OCI-LY7 (cell line): ENCODE measurements at regions of chr22 and their contacts with region 1.

Region 1: GRCh38 chr22:24325105-24325757 is 54.6 kb downstream of the SPECC1L start:
- DNase-seq: peak; percentile 79
- H3K4me3 ChIP-seq: no peak overlapping the region
- H3K27ac ChIP-seq: no peak overlapping the region
- H3K4me1 ChIP-seq: peaks cover 10% of the 10 kb centered on the region
- CTCF ChIP-seq: peak; percentile 92

Region 2: DNA sequence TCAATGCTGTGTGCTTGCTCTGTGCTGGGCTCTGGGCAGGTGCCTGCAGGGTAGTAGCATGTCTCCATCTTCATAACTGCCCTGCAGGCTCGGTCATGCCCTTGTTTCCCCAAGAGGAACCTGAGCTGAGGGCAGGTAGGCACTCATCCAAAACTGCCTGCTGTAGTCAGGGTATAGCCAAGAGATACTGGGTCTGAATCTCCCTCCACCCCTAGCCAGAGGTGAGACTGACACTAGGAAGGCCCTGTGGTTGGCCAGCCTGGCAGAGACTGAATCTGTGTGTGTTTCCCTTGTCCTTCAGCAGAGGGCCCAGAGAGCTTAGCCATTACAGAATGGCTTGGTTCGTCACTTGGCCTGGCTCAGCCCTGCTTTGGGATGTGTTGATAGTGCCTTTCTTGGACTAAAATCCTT is 223.3 kb before region 1 on chr22:
- CTCF ChIA-PET with region 1: no interaction called
- POLR2A ChIA-PET with region 1: no interaction called
- intact Hi-C with region 1: no loop called
- DNase-seq: no peak
- H3K4me3 ChIP-seq: no peak overlapping the region
- H3K27ac ChIP-seq: no peak overlapping the region
- H3K4me1 ChIP-seq: no peaks in the 10 kb centered on the region
- CTCF ChIP-seq: no peak

Region 3: GRCh38 chr22:24265734-24266133 is 59.5 kb before region 1 on chr22:
- CTCF ChIA-PET with region 1: no interaction called
- POLR2A ChIA-PET with region 1: no interaction called
- intact Hi-C with region 1: no loop called
- DNase-seq: peak; percentile 16
- H3K4me3 ChIP-seq: no peak overlapping the region
- H3K27ac ChIP-seq: no peak overlapping the region
- H3K4me1 ChIP-seq: peaks cover 23% of the 10 kb centered on the region
- CTCF ChIP-seq: no peak

Region 4: GRCh38 chr22:24525416-24526037 is 200.3 kb after region 1 on chr22:
- CTCF ChIA-PET with region 1: no interaction called
- POLR2A ChIA-PET with region 1: no interaction called
- intact Hi-C with region 1: loop called (anchors 2 kb)
- DNase-seq: peak; percentile 88
- H3K4me3 ChIP-seq: no peak overlapping the region
- H3K27ac ChIP-seq: no peak overlapping the region
- H3K4me1 ChIP-seq: peaks cover 22% of the 10 kb centered on the region
- CTCF ChIP-seq: peak; percentile 96

Region 5: DNA sequence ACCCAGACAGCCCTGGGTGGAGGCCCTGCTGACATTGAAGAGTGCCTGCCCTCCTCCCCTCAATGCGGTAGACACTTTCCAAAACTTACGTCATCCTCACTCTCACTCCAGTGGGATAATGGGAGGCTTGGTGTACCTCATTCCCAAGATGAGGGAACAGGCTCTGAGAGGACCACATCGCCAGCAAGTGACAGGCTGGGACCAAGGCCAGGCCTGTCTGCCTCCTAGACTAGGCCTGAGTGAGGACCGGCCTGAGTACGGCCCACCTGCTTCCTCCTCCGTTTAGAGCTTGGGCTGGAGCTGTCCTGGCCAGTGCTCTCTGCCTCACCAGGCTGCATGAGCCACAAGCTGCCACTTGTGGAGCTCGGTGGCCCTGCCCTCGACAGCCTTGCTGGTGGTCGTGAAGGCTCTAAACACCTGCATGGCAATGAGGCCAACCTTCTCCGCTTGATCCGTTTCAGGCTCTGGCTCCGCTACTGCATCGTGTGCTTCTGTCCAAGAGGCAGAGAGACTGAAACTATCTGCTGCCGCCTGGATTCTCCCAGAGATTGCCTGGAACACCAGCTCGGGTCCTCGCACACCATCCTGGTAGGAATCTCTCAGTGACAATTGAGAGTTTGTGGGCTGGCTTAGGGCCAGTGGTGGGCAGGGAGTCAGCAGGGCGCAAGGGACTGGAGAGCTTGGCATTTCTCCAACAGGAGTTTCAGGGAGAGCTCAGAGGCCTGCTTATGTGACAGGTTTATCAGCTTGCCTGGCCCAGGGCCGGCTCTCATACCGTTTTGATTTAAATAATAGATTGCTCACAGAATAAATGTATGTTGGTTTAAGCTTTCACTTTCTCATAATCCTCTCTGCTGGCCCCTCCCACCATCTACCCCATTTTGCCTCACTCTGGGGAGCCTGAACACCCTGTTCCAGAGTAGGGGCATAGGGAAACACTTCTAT is 258.3 kb after region 1 on chr22:
- CTCF ChIA-PET with region 1: no interaction called
- POLR2A ChIA-PET with region 1: no interaction called
- intact Hi-C with region 1: no loop called
- DNase-seq: no peak
- H3K4me3 ChIP-seq: no peak overlapping the region
- H3K27ac ChIP-seq: no peak overlapping the region
- H3K4me1 ChIP-seq: no peaks in the 10 kb centered on the region
- CTCF ChIP-seq: no peak